ENCODE measurements at regions of chr4 and their contacts with region 1.

Region 1: DNA sequence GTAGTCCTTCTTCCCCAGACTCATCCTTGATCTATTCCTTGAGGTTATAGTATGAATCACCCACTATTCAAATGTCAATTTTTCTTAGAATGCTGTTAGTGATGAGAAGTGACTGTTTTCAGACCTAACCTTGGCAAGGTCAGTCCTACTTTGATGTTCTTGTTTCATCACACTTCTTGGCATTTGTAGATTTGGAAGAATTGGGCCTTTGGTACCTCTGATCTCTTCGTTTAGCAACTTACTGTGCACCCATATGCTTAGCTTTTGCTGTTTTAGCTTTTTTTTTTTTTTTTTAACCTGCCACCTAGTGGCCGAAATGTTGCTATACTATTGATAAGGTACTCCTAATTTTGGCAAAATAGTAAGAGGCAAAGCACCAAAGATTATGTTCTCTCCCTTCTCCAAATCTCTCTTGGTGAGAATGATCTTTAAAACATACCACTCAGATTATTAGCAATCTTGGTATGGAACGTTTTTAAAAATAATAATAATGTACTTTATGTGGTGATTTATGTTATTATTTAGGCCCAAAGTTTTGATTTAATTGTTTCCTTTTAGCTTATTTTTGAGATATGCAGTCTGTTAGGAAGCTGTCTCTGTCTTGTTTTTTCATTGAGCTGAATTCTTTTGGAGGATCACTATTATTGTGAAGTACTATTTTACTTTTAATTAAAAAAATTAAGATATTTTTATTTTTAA is 16.6 kb downstream of the DCK start:
- DNase-seq: peak in 4 of 14 experiments; percentile 27 to 74 (median 59)
- ATAC-seq: peak; percentile 78
- H3K4me3 ChIP-seq: no peak overlapping the region
- H3K4me3 Mint-ChIP-seq: peak overlapping the region; percentile 1
- H3K27ac ChIP-seq: no peak overlapping the region
- H3K27ac Mint-ChIP-seq: peak overlapping the region; percentile 57
- H3K4me1 ChIP-seq: peaks cover 15% of the 10 kb centered on the region
- H3K4me1 Mint-ChIP-seq: peaks cover 44% of the 10 kb centered on the region
- H3K27me3 ChIP-seq: no peaks in the 10 kb centered on the region
- H3K27me3 Mint-ChIP-seq: no peaks in the 10 kb centered on the region
- CTCF ChIP-seq: peak; percentile 88

Region 2: GRCh38 chr4:70601422-70602039 is 408.5 kb before region 1 on chr4:
- CTCF ChIA-PET with region 1: interaction called, 5 read pairs
- POLR2A ChIA-PET with region 1: no interaction called
- intact Hi-C with region 1: loop called (anchors 1 to 5 kb)
- DNase-seq: peak; percentile 40 to 82 (median 55)
- ATAC-seq: peak; percentile 80
- H3K4me3 ChIP-seq: no peak overlapping the region
- H3K4me3 Mint-ChIP-seq: no peak overlapping the region
- H3K27ac ChIP-seq: no peak overlapping the region
- H3K27ac Mint-ChIP-seq: no peak overlapping the region
- H3K4me1 ChIP-seq: no peaks in the 10 kb centered on the region
- H3K4me1 Mint-ChIP-seq: no peaks in the 10 kb centered on the region
- H3K27me3 ChIP-seq: no peaks in the 10 kb centered on the region
- H3K27me3 Mint-ChIP-seq: peaks cover 4% of the 10 kb centered on the region
- CTCF ChIP-seq: peak; percentile 75

Region 3: GRCh38 chr4:70678383-70678999 is 331.5 kb before region 1 on chr4:
- CTCF ChIA-PET with region 1: no interaction called
- POLR2A ChIA-PET with region 1: no interaction called
- intact Hi-C with region 1: no loop called
- DNase-seq: peak in 1 of 14 experiments; percentile 12
- ATAC-seq: no peak
- H3K4me3 ChIP-seq: no peak overlapping the region
- H3K4me3 Mint-ChIP-seq: no peak overlapping the region
- H3K27ac ChIP-seq: no peak overlapping the region
- H3K27ac Mint-ChIP-seq: no peak overlapping the region
- H3K4me1 ChIP-seq: peaks cover 7% of the 10 kb centered on the region
- H3K4me1 Mint-ChIP-seq: peaks cover 5% of the 10 kb centered on the region
- H3K27me3 ChIP-seq: no peaks in the 10 kb centered on the region
- H3K27me3 Mint-ChIP-seq: no peaks in the 10 kb centered on the region
- CTCF ChIP-seq: no peak

Region 4: DNA sequence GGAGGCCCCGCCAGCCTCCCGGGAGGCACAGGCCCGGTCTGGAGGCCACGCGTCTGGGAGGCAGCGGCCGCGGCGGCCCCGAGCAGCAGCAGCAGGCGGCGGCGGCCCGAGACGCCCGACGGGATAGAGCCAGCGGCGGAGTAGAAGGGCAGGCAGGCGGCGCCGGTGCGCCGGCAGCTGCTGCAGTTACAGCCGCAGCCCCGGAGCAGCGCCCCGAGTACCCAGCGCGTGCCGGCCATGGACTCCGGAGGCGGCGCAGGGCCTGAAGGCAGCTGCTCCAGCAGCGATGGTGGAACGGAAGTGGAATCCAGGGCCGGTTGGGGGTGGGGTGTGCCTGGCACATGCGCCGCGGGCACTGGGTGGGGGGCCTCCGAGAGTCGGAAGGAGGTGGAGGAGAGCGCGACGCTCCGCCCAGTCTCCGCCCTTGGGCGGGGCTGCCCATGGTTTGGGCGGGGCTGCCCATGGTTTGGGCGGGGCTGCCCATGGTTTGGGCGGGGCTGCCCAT is 170.4 kb before region 1 on chr4 and contains the start of gene GRSF1:
- CTCF ChIA-PET with region 1: interaction called, 4 read pairs
- POLR2A ChIA-PET with region 1: no interaction called
- intact Hi-C with region 1: loop called in 1 of 2 experiments (anchors 5 kb)
- DNase-seq: peak; percentile 92 to 97 (median 94)
- ATAC-seq: peak; percentile 91
- H3K4me3 ChIP-seq: peak within 1 kb of the TSS; percentile 73
- H3K4me3 Mint-ChIP-seq: peak within 1 kb of the TSS; percentile 100
- H3K27ac ChIP-seq: peak within 1 kb of the TSS; percentile 69 to 73
- H3K27ac Mint-ChIP-seq: peak within 1 kb of the TSS; percentile 93
- H3K4me1 ChIP-seq: peaks cover 35% of the 10 kb centered on the region
- H3K4me1 Mint-ChIP-seq: peaks cover 34% of the 10 kb centered on the region
- H3K27me3 ChIP-seq: no peaks in the 10 kb centered on the region
- H3K27me3 Mint-ChIP-seq: no peaks in the 10 kb centered on the region
- CTCF ChIP-seq: no peak
- total RNA-seq, gene GRSF1: 32.7 to 34.1 TPM

Region 5: DNA sequence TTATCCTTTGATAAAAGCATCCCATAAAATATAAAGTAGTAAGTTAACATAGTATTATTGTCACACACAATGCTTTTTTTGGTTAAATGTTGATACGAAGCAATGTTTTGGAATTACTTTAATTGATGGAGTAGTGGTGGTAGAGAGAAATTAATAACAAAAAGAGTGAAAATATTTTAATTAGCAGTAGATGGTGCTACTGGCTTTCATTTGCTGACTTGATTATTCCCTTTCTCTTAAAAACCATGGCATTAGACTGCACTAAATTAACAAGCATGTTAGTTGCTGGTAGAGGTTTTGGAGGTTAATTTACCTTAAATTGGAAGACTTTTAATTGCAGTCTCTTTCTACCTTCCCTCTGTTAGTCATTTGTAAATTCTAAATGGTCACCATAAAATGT is 25.4 kb before region 1 on chr4:
- CTCF ChIA-PET with region 1: interaction called, 10 read pairs
- POLR2A ChIA-PET with region 1: interaction called, 3 read pairs
- intact Hi-C with region 1: loop called (anchors 1 to 2 kb)
- DNase-seq: peak in 3 of 14 experiments; percentile 32 to 44 (median 35)
- ATAC-seq: peak; percentile 54
- H3K4me3 ChIP-seq: no peak overlapping the region
- H3K4me3 Mint-ChIP-seq: no peak overlapping the region
- H3K27ac ChIP-seq: no peak overlapping the region
- H3K27ac Mint-ChIP-seq: no peak overlapping the region
- H3K4me1 ChIP-seq: no peaks in the 10 kb centered on the region
- H3K4me1 Mint-ChIP-seq: no peaks in the 10 kb centered on the region
- H3K27me3 ChIP-seq: no peaks in the 10 kb centered on the region
- H3K27me3 Mint-ChIP-seq: no peaks in the 10 kb centered on the region
- CTCF ChIP-seq: peak; percentile 65

Region 6: DNA sequence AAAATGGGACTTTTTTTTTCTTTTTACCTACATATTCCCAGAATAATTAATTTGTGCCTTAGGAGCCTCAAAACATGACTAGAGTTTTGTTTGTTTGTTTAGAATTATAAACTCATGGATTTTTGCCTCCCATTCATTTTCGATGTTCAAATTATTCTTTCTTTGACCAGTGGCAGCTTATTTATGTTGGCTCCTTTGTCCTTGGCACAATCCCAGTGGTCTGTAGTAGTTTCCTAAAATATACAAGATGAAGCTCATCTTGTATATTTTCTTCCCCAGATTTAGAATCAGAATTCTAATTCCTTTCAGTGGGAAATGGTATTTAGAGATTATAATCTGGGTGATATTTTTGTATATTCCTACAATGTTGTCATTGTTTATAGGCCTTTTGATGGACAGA is 10.6 kb after region 1 on chr4:
- CTCF ChIA-PET with region 1: interaction called, 10 read pairs
- POLR2A ChIA-PET with region 1: no interaction called
- intact Hi-C with region 1: no loop called
- DNase-seq: no peak
- ATAC-seq: no peak
- H3K4me3 ChIP-seq: no peak overlapping the region
- H3K4me3 Mint-ChIP-seq: no peak overlapping the region
- H3K27ac ChIP-seq: no peak overlapping the region
- H3K27ac Mint-ChIP-seq: peak overlapping the region; percentile 49
- H3K4me1 ChIP-seq: no peaks in the 10 kb centered on the region
- H3K4me1 Mint-ChIP-seq: peaks cover 12% of the 10 kb centered on the region
- H3K27me3 ChIP-seq: no peaks in the 10 kb centered on the region
- H3K27me3 Mint-ChIP-seq: no peaks in the 10 kb centered on the region
- CTCF ChIP-seq: no peak

Region 7: DNA sequence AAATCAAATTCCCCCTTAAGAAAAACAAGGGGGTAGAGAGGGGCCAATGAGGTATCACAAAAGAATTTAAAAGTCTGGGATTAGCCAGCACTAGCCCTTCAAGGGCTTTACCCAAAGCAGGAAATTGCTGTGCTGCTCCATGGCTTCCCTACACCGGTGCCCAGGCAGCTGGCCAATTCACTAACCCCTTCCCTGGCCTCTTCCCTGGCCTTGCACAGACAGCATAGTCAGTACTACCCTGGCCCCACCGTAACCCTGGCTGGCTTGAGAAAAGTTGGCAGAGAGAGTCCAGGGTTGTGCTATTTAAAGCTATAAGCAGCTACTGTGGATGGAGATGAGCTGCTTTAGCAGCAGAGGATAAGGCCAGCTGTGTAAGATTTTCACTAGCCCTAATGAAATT is 1515.9 kb after region 1 on chr4:
- CTCF ChIA-PET with region 1: no interaction called
- POLR2A ChIA-PET with region 1: no interaction called
- intact Hi-C with region 1: no loop called
- DNase-seq: no peak
- ATAC-seq: no peak
- H3K4me3 ChIP-seq: no peak overlapping the region
- H3K4me3 Mint-ChIP-seq: no peak overlapping the region
- H3K27ac ChIP-seq: no peak overlapping the region
- H3K27ac Mint-ChIP-seq: no peak overlapping the region
- H3K4me1 ChIP-seq: no peaks in the 10 kb centered on the region
- H3K4me1 Mint-ChIP-seq: no peaks in the 10 kb centered on the region
- H3K27me3 ChIP-seq: no peaks in the 10 kb centered on the region
- H3K27me3 Mint-ChIP-seq: peaks cover 9% of the 10 kb centered on the region
- CTCF ChIP-seq: no peak